ENCODE measurements at regions of chr12 and their contacts with region 1.

Region 1: GRCh38 chr12:68807576-68808387 is at the start of gene MDM2:
- DNase-seq: peak; percentile 97
- H3K4me3 Mint-ChIP-seq: peak within 1 kb of the TSS; percentile 93
- H3K27ac Mint-ChIP-seq: peak within 1 kb of the TSS; percentile 99
- H3K4me1 Mint-ChIP-seq: peaks cover 28% of the 10 kb centered on the region
- H3K27me3 Mint-ChIP-seq: no peaks in the 10 kb centered on the region
- total RNA-seq, gene MDM2: 125 to 136 TPM

Region 2: GRCh38 chr12:68331869-68332727 is 475.7 kb before region 1 on chr12 and contains the start of gene MDM1:
- CTCF ChIA-PET with region 1: no interaction called
- POLR2A ChIA-PET with region 1: no interaction called
- intact Hi-C with region 1: loop called (anchors 1 kb)
- DNase-seq: peak; percentile 97
- H3K4me3 Mint-ChIP-seq: peak within 1 kb of the TSS; percentile 85
- H3K27ac Mint-ChIP-seq: peak within 1 kb of the TSS; percentile 71
- H3K4me1 Mint-ChIP-seq: peaks cover 31% of the 10 kb centered on the region
- H3K27me3 Mint-ChIP-seq: peaks cover 2% of the 10 kb centered on the region
- total RNA-seq, gene MDM1: 13.8 to 15.6 TPM

Region 3: DNA sequence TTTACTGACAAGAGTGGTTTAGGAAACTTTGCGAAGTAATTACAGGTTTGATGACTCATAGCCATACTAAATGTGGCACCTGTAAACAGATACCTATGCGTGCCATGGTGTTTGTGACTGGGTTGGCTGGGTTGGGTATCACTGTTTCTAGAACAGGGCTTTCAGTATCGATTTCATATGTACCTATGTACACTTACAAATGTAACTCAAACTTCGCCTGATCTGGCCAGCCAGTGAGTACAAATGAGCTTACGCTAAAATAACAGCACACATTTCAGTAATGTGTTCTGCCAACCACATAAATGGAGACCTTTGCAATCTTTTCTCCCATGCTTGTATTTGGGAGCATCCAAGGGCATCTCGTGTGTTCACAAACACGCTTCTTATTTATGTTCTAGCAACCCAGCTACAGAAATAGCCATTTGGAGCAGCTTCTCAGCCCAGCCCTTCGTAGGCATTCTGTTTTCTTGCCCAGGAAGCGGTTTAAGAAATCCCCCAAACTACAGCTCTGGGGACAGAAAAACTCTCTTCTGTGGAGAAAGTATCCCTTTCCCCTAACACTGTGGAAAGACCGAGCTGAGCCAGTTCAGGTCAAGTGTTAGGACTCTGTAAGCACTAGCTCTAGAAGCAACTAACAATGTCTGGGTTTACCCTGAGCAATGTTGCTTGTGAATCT is 433.3 kb before region 1 on chr12:
- CTCF ChIA-PET with region 1: interaction called, 3 read pairs
- POLR2A ChIA-PET with region 1: no interaction called
- intact Hi-C with region 1: loop called (anchors 5 kb)
- DNase-seq: peak; percentile 84
- H3K4me3 Mint-ChIP-seq: peak overlapping the region; percentile 27
- H3K27ac Mint-ChIP-seq: peak overlapping the region; percentile 98
- H3K4me1 Mint-ChIP-seq: peaks cover 45% of the 10 kb centered on the region
- H3K27me3 Mint-ChIP-seq: no peaks in the 10 kb centered on the region

Region 4: DNA sequence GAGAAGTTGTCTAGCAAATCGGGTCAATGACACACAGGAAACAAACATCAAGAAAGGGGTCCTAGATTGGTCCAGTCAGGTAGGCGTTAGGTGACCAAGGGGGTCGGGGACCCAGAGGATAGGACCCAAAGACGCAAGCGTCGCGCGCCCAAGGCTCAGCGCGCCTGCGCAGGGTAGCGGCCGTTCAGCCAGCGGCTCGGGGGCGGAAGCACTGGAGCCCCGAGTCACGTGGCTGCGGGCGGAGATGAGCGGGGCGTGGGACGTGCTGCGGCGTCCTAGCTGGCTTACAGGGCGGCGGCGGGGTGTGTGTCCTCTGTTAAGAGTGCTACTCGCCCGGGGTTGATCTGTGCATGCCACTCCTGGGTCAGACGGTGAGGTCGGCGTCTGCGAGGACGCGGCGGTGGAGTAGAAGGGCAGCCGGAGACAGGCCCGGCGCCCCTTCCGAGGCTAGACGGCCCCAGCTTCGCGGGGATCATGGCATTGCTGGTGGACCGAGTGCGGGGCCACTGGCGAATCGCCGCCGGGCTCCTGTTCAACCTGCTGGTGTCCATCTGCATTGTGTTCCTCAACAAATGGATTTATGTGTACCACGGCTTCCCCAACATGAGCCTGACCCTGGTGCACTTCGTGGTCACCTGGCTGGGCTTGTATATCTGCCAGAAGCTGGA is 61.7 kb before region 1 on chr12 and contains the start of gene SLC35E3:
- CTCF ChIA-PET with region 1: interaction called, 29 read pairs
- POLR2A ChIA-PET with region 1: interaction called, 20 read pairs
- intact Hi-C with region 1: loop called (anchors 1 kb)
- DNase-seq: peak; percentile 96
- H3K4me3 Mint-ChIP-seq: peak within 1 kb of the TSS; percentile 92
- H3K27ac Mint-ChIP-seq: peak within 1 kb of the TSS; percentile 64
- H3K4me1 Mint-ChIP-seq: peaks cover 23% of the 10 kb centered on the region
- H3K27me3 Mint-ChIP-seq: no peaks in the 10 kb centered on the region
- total RNA-seq, gene SLC35E3: 4.1 to 5.3 TPM

Region 5: DNA sequence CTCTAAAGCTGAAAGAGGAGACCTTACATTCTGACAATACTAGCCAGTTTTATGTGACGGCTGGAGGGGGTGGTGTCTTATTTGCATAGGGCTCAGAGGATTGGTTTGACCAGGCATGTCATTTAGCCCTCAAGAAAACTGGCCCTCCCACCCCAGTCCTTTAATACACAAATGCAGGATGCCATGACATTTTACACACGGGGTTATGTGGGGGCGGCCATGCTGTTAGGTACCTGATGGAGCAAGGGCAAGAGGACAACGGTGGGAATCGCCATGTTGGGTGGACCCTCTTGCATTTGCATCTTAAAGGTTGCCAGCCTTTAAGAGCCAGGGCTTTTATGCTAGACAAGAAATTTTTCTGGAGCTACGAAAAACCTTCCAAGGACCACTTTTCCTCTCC is 23.5 kb after region 1 on chr12:
- CTCF ChIA-PET with region 1: interaction called, 22 read pairs
- POLR2A ChIA-PET with region 1: no interaction called
- intact Hi-C with region 1: loop called (anchors 1 kb)
- DNase-seq: no peak
- H3K4me3 Mint-ChIP-seq: no peak overlapping the region
- H3K27ac Mint-ChIP-seq: no peak overlapping the region
- H3K4me1 Mint-ChIP-seq: peaks cover 15% of the 10 kb centered on the region
- H3K27me3 Mint-ChIP-seq: no peaks in the 10 kb centered on the region